MCF 10A (cell line): ENCODE measurements at regions of chr2 and their contacts with region 1.

Region 1: GRCh38 chr2:230987137-230988020 is 8.5 kb upstream of the SPATA3 start:
- DNase-seq: peak; percentile 77
- H3K4me3 Mint-ChIP-seq: peak overlapping the region; percentile 65
- H3K27ac Mint-ChIP-seq: no peak overlapping the region
- H3K4me1 Mint-ChIP-seq: no peaks in the 10 kb centered on the region
- H3K27me3 Mint-ChIP-seq: no peaks in the 10 kb centered on the region
- CTCF ChIP-seq: peak; percentile 93

Region 2: GRCh38 chr2:230814616-230815015 is 172.8 kb before region 1 on chr2:
- CTCF ChIA-PET with region 1: interaction called, 15 read pairs
- POLR2A ChIA-PET with region 1: no interaction called
- intact Hi-C with region 1: no loop called
- DNase-seq: peak; percentile 30
- H3K4me3 Mint-ChIP-seq: no peak overlapping the region
- H3K27ac Mint-ChIP-seq: no peak overlapping the region
- H3K4me1 Mint-ChIP-seq: no peaks in the 10 kb centered on the region
- H3K27me3 Mint-ChIP-seq: no peaks in the 10 kb centered on the region
- CTCF ChIP-seq: peak; percentile 28

Region 3: GRCh38 chr2:230824406-230824978 is 162.9 kb before region 1 on chr2:
- CTCF ChIA-PET with region 1: interaction called, 76 read pairs
- POLR2A ChIA-PET with region 1: interaction called, 9 read pairs
- intact Hi-C with region 1: loop called (anchors 1 kb)
- DNase-seq: peak; percentile 86
- H3K4me3 Mint-ChIP-seq: peak overlapping the region; percentile 67
- H3K27ac Mint-ChIP-seq: no peak overlapping the region
- H3K4me1 Mint-ChIP-seq: peaks cover 5% of the 10 kb centered on the region
- H3K27me3 Mint-ChIP-seq: no peaks in the 10 kb centered on the region
- CTCF ChIP-seq: peak; percentile 53

Region 4: DNA sequence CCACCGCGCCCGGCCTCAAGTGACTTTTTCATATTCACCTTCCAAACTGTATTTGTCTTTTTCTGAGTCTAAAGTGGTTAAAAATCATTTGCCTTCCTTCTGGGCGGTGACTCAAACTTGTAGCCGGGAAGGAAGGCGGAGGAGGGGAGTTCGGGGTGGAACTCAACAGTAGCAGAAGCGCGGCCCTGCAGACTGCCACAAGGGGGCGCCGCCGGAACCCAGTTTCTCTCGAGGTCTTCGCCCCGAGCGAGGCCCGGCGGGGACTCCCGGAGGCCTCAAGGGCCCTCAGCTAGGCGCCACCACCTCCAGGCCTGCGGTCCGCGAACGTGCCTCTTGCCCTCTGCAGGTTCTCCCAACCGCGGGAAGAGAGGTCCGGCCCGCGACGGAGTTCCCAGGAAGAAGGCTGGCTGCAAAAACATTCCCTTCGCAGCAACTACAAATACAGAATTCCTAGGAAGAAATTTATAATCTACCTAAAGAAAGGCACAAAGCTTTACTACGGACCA is 139.4 kb before region 1 on chr2:
- CTCF ChIA-PET with region 1: interaction called, 4 read pairs
- POLR2A ChIA-PET with region 1: no interaction called
- intact Hi-C with region 1: loop called (anchors 1 kb)
- DNase-seq: peak; percentile 78
- H3K4me3 Mint-ChIP-seq: no peak overlapping the region
- H3K27ac Mint-ChIP-seq: no peak overlapping the region
- H3K4me1 Mint-ChIP-seq: peaks cover 11% of the 10 kb centered on the region
- H3K27me3 Mint-ChIP-seq: peaks cover 32% of the 10 kb centered on the region
- CTCF ChIP-seq: peak; percentile 65

Region 5: DNA sequence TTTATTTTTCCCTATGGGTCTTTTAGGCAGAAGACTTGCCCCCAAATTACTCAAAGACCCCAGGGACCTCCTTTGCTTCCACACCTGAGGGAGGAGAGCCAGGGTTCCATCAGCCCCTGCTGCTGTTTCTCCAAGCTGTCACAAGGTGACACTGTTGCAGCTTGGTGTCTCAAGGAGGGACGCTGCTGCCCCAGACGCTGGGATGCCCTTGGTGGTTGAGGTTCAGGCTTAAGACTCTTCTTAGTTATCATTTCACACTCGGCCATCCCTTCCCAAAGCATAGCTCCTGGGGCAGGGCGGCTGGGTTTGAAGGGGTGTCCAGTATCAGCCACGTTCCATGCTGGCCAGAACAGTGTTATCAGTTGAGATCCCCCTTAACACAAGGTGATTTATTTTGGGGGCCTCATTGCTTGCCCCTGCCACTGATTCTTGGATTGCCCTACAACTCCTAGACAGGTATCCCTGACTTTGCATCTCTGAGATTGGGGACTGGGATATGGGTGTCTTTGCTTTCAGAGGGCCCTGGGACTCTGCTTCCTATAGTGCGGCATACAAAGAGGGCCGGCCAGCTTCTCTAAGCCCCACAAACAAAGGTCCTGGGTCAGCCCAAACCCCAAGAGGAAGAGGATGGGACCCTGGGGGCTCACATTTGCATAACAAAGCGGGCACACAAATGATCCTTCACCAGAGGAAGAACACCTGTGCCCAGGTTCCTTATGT is 85.0 kb before region 1 on chr2:
- CTCF ChIA-PET with region 1: interaction called, 93 read pairs
- POLR2A ChIA-PET with region 1: no interaction called
- intact Hi-C with region 1: loop called (anchors 1 kb)
- DNase-seq: peak; percentile 75
- H3K4me3 Mint-ChIP-seq: no peak overlapping the region
- H3K27ac Mint-ChIP-seq: no peak overlapping the region
- H3K4me1 Mint-ChIP-seq: no peaks in the 10 kb centered on the region
- H3K27me3 Mint-ChIP-seq: peaks cover 33% of the 10 kb centered on the region
- CTCF ChIP-seq: peak; percentile 89

Region 6: DNA sequence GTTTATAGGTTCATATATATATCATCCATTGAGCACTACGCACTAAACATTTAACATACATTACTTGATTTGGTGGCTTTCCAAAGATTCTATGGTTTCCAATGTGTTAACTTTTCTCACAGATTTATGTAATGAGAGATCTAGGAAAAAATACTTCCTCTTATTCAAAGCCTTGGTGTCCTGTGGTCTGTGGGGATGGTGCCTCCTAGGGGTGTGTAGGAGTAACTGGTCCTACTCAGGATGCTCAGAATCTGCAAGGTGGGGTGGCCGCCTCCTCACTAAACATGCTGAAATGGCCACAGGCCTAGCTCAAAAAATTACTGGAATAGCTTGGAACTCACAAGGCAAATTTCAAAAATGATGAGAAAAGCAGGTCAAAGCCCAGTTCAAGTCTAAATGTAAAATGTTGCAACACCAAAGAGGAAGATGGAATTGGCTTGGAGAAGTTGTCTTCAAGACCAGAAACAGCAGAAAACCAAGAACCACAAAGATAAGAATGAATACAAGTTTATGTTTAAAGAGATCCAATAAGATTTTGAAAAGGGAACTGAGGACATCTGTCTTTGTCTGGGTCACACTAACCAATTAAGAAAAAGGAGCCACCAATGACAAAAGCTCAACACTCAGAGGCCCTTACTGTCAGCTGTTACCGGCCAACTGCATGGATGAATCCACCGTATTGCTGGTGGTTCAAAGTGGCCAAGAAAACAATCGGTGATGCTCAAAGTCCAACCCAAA is 73.8 kb before region 1 on chr2:
- CTCF ChIA-PET with region 1: interaction called, 13 read pairs
- POLR2A ChIA-PET with region 1: no interaction called
- intact Hi-C with region 1: no loop called
- DNase-seq: peak; percentile 32
- H3K4me3 Mint-ChIP-seq: no peak overlapping the region
- H3K27ac Mint-ChIP-seq: no peak overlapping the region
- H3K4me1 Mint-ChIP-seq: peaks cover 9% of the 10 kb centered on the region
- H3K27me3 Mint-ChIP-seq: peaks cover 52% of the 10 kb centered on the region
- CTCF ChIP-seq: peak; percentile 20

Region 7: DNA sequence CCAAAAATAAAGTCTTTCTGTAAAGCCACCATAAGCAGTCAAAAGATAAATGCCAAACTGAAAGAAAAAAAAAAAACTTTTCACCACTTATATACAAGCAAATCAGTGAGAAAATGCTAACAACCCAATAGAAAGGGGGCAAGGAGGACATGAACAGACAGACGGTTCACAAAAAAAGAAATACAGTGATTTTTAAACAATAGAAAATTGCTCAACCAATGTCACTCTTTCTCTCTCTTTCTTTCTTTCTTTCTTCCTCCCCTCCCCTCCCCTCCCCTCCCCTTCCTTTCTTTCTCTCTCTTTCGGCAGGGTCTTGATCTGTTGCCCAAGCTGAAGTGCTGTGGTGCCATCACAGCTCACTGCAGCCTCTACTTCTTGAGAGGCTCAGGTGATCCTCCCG is 20.3 kb before region 1 on chr2:
- CTCF ChIA-PET with region 1: interaction called, 10 read pairs
- POLR2A ChIA-PET with region 1: interaction called, 3 read pairs
- intact Hi-C with region 1: no loop called
- DNase-seq: no peak
- H3K4me3 Mint-ChIP-seq: no peak overlapping the region
- H3K27ac Mint-ChIP-seq: no peak overlapping the region
- H3K4me1 Mint-ChIP-seq: no peaks in the 10 kb centered on the region
- H3K27me3 Mint-ChIP-seq: no peaks in the 10 kb centered on the region
- CTCF ChIP-seq: no peak